HepG2 (cell line): ENCODE measurements at regions of chr15 and their contacts with region 1.

Region 1: DNA sequence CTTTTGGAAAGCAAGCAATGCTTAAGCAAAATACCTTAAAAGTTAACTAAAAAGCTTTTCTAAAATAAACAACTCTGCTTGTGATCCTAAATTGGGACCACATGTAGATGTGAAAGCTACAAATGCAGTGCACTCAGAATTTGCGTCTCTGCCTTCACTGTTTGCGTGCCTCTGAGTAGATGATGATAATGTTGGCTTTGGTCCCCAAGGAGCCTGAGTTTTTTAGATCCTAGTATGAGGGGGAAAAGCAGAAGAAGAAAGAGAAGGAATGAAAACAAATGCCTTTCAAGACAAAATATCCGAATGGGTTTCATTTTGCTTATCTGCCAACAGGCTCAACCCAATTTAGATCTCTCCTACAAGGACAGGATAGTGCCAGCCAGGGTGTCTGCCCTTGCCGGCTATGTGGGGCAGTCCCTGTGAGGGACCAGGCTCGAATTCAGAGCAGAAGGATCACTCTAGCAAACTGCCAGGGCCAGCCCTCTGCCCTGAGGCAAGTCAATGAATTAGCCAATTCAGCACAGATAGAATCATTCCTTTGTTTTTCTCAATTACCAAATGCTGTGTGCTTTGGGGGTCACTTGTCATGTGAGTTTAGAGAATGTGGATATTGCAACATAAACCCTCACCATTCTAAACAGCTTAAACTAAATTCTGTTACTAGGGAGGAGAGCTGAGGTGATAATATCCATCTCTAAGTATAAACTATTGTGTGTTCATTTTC is 28.5 kb downstream of the SCG5 start:
- DNase-seq: peak; percentile 84
- ATAC-seq: peak; percentile 97
- H3K4me3 ChIP-seq: peak overlapping the region in 1 of 3 experiments; percentile 1; a peak in 1 of 6 replicates
- H3K27ac ChIP-seq: peak overlapping the region; percentile 2
- H3K4me1 ChIP-seq: peaks cover 25% of the 10 kb centered on the region
- H3K27me3 ChIP-seq: no peaks in the 10 kb centered on the region
- CTCF ChIP-seq: no peak
- EP300 ChIP-seq: peak in 1 of 2 experiments; percentile 64; a peak in 1 of 4 replicates
- POLR2A ChIP-seq: no peak
- RAD21 ChIP-seq: no peak

Region 2: DNA sequence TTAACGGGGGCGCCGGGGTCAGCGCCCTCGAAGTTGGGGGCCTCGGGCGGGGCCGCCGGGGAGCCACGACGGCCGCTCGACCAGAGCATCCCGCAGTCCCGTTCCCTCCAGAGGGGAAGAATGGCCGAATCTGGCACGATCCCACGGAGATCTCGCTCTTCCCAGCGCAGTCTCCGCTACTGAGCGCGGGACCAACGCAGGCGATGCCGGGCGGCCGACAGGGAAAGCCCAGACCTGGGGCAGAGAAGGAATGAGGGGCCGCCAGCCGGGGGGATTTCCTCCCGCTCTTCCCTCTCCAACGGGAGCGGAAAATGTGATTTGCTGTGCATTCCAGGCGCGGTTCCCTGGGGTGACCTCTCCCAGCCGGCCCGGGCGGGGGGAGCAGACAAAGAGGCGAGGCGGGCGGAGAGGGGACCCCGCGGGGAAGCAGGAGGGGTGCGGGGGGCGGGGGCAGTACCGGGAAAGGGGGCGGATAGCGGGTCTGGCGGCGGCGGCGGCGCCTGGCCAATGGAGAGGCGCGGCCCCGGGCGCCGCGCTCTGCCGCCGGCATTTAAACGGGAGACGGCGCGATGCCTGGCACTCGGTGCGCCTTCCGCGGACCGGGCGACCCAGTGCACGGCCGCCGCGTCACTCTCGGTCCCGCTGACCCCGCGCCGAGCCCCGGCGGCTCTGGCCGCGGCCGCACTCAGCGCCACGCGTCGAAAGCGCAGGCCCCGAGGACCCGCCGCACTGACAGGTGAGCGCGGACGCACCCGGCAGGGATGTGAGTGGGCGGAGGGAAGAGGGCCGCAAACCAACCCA is 47.6 kb after region 1 on chr15 and contains the start of gene GREM1:
- CTCF ChIA-PET with region 1: no interaction called
- POLR2A ChIA-PET with region 1: no interaction called
- in situ Hi-C with region 1: loop called (anchors 5 kb)
- intact Hi-C with region 1: loop called (anchors 5 kb)
- DNase-seq: no peak
- ATAC-seq: peak; percentile 48
- H3K4me3 ChIP-seq: peak within 1 kb of the TSS; percentile 33 to 68 (median 33)
- H3K27ac ChIP-seq: no peak within 1 kb of the TSS
- H3K4me1 ChIP-seq: peaks cover 21% of the 10 kb centered on the region
- H3K27me3 ChIP-seq: peaks cover 12 to 60% of the 10 kb centered on the region in 2 experiments
- CTCF ChIP-seq: no peak
- EP300 ChIP-seq: no peak
- POLR2A ChIP-seq: no peak
- RAD21 ChIP-seq: no peak
- total RNA-seq, gene GREM1: 0.02 and 0.11 TPM in 2 replicates

Region 3: GRCh38 chr15:32743411-32744140 is 73.5 kb after region 1 on chr15:
- CTCF ChIA-PET with region 1: no interaction called
- POLR2A ChIA-PET with region 1: no interaction called
- in situ Hi-C with region 1: no loop called
- intact Hi-C with region 1: no loop called
- DNase-seq: no peak
- ATAC-seq: no peak
- H3K4me3 ChIP-seq: no peak overlapping the region
- H3K27ac ChIP-seq: no peak overlapping the region
- H3K4me1 ChIP-seq: no peaks in the 10 kb centered on the region
- H3K27me3 ChIP-seq: no peaks in the 10 kb centered on the region; a peak in 3 of 5 replicates
- CTCF ChIP-seq: no peak
- EP300 ChIP-seq: no peak
- POLR2A ChIP-seq: no peak
- RAD21 ChIP-seq: no peak

Region 4: GRCh38 chr15:32838820-32839219 is 168.8 kb after region 1 on chr15:
- CTCF ChIA-PET with region 1: no interaction called
- POLR2A ChIA-PET with region 1: no interaction called
- in situ Hi-C with region 1: loop called (anchors 5 kb)
- intact Hi-C with region 1: no loop called
- DNase-seq: peak; percentile 71
- ATAC-seq: peak; percentile 90
- H3K4me3 ChIP-seq: no peak overlapping the region
- H3K27ac ChIP-seq: no peak overlapping the region
- H3K4me1 ChIP-seq: peaks cover 17% of the 10 kb centered on the region
- H3K27me3 ChIP-seq: no peaks in the 10 kb centered on the region
- CTCF ChIP-seq: no peak
- EP300 ChIP-seq: no peak
- POLR2A ChIP-seq: no peak
- RAD21 ChIP-seq: no peak

Region 5: GRCh38 chr15:33007303-33007855 is 337.3 kb after region 1 on chr15:
- CTCF ChIA-PET with region 1: no interaction called
- POLR2A ChIA-PET with region 1: no interaction called
- in situ Hi-C with region 1: no loop called
- intact Hi-C with region 1: no loop called
- DNase-seq: no peak
- ATAC-seq: no peak
- H3K4me3 ChIP-seq: no peak overlapping the region
- H3K27ac ChIP-seq: no peak overlapping the region
- H3K4me1 ChIP-seq: no peaks in the 10 kb centered on the region
- H3K27me3 ChIP-seq: no peaks in the 10 kb centered on the region
- CTCF ChIP-seq: no peak
- EP300 ChIP-seq: no peak
- POLR2A ChIP-seq: no peak
- RAD21 ChIP-seq: no peak